Activated CD4-positive, alpha-beta T cell treated with anti-CD3 and anti-CD28 coated beads, Interleukin-2, amount 10 ng/mL, durations not matched to agents 24 days and 14 days (primary cell): ENCODE measurements at regions of chr1 and their contacts with region 1.

Region 1: DNA sequence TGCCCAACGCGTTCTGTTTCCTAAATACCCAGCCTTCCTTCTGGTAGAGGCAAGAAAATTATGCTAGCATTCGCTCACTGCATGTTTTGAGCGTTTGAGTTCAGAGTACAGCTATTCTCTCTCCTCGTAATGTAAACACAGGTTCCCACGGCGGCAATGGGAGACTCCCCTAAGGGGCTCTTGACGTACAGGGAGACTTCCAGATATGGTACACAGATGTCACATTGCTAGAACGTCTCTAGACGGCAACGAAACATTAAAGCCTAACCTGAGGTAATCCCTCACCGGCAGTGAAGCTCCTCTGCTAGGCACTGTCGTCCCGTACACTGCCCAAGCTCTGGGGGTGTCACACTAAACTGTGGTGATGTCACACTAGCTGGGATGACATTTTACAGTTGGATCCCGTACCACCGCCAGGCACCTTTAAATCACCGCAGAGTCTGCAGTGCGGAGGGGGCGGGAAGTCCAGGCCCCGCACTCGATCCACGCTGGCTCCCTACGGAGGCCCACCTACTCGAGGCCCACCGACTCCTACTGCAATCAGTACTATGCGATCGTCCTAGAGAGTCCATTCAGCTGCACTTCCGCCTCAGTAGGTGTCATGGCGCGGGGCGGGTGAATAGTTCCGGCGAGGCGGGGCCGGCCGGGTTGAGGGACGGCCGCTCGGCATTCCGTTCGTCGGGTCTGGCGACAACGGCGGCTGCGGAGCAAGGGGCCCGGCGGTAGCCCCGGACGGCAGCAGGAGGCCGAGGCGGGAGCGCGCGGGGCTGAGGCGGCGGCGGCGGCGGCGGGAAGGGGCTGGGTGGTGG is at the start of gene HIPK1:
- DNase-seq: peak; percentile 98
- H3K4me3 Mint-ChIP-seq: peak within 1 kb of the TSS; percentile 98
- H3K27ac Mint-ChIP-seq: peak within 1 kb of the TSS; percentile 100
- H3K4me1 Mint-ChIP-seq: peaks cover 45% of the 10 kb centered on the region
- H3K27me3 Mint-ChIP-seq: peaks cover 4% of the 10 kb centered on the region
- total RNA-seq, gene HIPK1: 81.3 and 85.9 TPM in 2 replicates

Region 2: DNA sequence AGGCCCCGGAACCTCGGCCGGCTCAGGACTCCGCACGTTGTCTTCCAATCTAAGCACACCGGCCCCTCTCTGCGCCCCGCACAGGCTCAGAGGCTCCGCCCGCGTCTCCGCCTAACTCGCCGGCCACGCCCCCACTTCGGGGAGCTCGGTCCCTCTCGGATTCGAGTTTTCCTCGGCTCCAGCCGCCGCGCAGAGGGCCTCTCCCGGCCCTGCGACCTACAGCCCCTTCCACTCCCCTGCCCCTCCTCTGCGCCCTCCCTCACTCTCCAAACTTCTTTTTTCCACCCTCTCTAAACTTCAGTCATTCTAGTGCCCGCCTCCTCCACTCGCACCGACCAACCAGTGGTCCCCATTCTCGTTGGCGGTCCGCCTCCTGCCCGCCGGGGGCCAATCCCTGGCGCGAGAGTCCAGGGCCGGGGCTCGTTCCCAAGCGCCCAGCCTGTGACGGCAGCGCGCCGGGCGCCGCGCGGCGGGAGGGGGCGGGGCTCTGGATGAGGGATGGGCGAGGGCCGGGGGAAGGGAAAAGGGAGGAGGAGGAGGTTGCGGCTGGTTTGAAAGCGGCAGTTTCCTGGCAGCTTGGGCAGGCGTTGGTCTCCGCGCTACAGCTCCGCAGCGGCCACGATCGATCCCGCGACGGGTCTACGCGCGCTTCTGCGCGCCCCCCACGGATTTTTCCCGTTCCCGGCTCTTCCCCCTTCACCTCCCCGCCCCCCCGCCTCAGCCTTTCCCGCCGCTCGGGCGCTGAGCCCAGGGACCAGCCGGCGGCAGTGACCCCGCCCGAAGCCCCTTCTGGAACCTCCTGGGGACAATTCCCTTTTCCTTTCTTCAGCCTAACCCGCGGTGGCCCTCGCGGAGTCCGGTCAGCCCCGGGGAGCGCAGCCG is 539.0 kb before region 1 on chr1 and contains the start of gene MAGI3:
- intact Hi-C with region 1: loop called (anchors 10 kb)
- DNase-seq: peak; percentile 99
- H3K4me3 Mint-ChIP-seq: peak within 1 kb of the TSS; percentile 90
- H3K27ac Mint-ChIP-seq: peak within 1 kb of the TSS; percentile 74
- H3K4me1 Mint-ChIP-seq: peaks cover 28% of the 10 kb centered on the region
- H3K27me3 Mint-ChIP-seq: peaks cover 46% of the 10 kb centered on the region
- total RNA-seq, gene MAGI3: 3.7 and 3.8 TPM in 2 replicates

Region 3: GRCh38 chr1:113811888-113812660 is 117.1 kb before region 1 on chr1 and contains the start of gene RSBN1:
- intact Hi-C with region 1: loop called (anchors 1 kb)
- DNase-seq: peak; percentile 100
- H3K4me3 Mint-ChIP-seq: peak within 1 kb of the TSS; percentile 96
- H3K27ac Mint-ChIP-seq: peak within 1 kb of the TSS; percentile 96
- H3K4me1 Mint-ChIP-seq: peaks cover 21% of the 10 kb centered on the region
- H3K27me3 Mint-ChIP-seq: no peaks in the 10 kb centered on the region
- total RNA-seq, gene RSBN1: 20.9 and 21.5 TPM in 2 replicates

Region 4: GRCh38 chr1:113871597-113872113 is 57.5 kb before region 1 on chr1 and contains the start of gene PTPN22:
- intact Hi-C with region 1: loop called (anchors 1 kb)
- DNase-seq: peak; percentile 95
- H3K4me3 Mint-ChIP-seq: peak within 1 kb of the TSS; percentile 94
- H3K27ac Mint-ChIP-seq: peak within 1 kb of the TSS; percentile 96
- H3K4me1 Mint-ChIP-seq: peaks cover 63% of the 10 kb centered on the region
- H3K27me3 Mint-ChIP-seq: peaks cover 2% of the 10 kb centered on the region
- total RNA-seq, gene PTPN22: 60.4 and 64.1 TPM in 2 replicates

Region 5: GRCh38 chr1:113940365-113941244 is 11.5 kb after region 1 on chr1:
- intact Hi-C with region 1: loop called (anchors 1 kb)
- DNase-seq: peak; percentile 82
- H3K4me3 Mint-ChIP-seq: peak overlapping the region; percentile 72
- H3K27ac Mint-ChIP-seq: peak overlapping the region; percentile 86
- H3K4me1 Mint-ChIP-seq: peaks cover 52% of the 10 kb centered on the region
- H3K27me3 Mint-ChIP-seq: no peaks in the 10 kb centered on the region

Region 6: DNA sequence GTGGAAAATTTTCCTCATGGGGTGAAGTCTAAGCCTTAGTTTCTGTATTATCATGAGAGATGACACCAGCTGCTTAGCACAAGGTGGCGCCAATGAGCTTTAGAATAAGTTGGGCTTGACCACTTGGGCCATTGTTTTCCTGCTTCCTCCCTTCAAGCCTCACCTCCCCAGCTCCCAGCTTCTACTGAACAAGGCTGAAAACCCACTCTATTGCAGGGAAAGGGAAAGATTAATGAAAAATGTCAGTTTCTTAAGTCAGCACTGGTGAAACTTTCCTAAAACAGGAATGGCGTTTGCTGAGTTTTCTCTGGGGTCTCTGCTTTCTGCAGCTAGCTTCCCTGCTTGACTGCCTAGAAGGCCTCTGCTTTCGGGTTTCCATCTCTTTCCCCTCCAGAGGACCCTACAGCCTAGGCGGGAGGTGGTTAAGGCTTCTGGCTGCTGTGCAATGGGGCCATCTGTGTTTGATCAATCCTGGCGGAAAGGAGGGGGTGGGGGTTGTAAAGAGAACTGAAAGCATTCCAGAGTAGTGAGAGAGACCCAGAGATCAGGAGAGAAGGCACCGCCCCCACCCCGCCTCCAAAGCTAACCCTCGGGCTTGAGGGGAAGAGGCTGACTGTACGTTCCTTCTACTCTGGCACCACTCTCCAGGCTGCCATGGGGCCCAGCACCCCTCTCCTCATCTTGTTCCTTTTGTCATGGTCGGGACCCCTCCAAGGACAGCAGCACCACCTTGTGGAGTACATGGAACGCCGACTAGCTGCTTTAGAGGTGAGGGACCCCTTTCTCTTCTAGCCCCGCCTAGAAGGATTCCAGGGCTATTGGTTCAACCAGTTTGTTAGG is 49.9 kb after region 1 on chr1 and contains the start of gene OLFML3:
- intact Hi-C with region 1: loop called (anchors 5 kb)
- DNase-seq: peak; percentile 82
- H3K4me3 Mint-ChIP-seq: no peak within 1 kb of the TSS
- H3K27ac Mint-ChIP-seq: peak within 1 kb of the TSS; percentile 10
- H3K4me1 Mint-ChIP-seq: peaks cover 37% of the 10 kb centered on the region
- H3K27me3 Mint-ChIP-seq: no peaks in the 10 kb centered on the region
- total RNA-seq, gene OLFML3: 0.09 TPM in 1 of 2 replicates, not detected in the other

Region 7: GRCh38 chr1:114093624-114094376 is 164.7 kb after region 1 on chr1:
- intact Hi-C with region 1: no loop called
- DNase-seq: no peak
- H3K4me3 Mint-ChIP-seq: no peak overlapping the region
- H3K27ac Mint-ChIP-seq: no peak overlapping the region
- H3K4me1 Mint-ChIP-seq: no peaks in the 10 kb centered on the region
- H3K27me3 Mint-ChIP-seq: peaks cover 13% of the 10 kb centered on the region